Dendritic cell treated with granulocyte-macrophage colony-stimulating factor and Interleukin-4, amounts not matched to agents 40 ng/mL and 50 ng/mL, for 4 days (primary cell): ENCODE measurements at regions of chr19 and their contacts with region 1.

Region 1: DNA sequence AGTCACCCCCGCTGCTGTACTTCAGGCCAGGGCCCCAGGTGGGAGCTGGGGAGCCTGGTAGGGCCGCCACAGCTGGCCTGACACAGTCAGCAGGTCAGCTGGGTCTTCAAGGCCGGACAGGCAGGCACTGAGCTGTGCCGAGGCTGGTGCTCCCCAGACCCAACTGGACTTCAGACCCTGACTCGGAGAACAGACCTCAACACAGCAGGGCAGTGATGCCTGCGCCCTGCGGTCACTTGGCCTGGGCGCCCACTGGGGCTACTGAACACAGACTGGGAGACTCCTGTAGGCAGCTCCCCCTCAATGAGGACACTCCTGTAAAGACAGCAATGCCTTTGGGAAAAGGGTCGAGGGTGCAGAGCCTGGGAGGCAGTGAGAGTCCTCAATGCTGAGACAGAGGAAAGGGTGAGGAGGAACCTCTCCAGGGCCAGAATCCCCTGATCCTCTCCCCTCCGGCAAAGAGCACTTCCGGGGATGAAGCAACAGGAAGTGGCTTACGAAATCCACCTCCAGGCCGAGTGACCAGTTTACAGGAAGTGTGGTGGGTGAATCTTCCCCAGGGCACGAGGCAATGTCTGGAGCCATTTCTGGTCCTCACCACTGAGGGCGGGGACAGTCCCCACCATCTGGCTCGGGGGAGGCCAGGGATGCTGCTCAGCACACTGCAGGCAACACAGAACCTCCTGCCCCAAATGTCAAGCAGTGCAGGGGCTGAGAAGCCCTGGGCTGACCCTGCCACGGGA is 40.8 kb upstream of the ISYNA1 start:
- H3K4me3 Mint-ChIP-seq: peak overlapping the region; percentile 69
- H3K27ac Mint-ChIP-seq: peak overlapping the region; percentile 98
- H3K4me1 Mint-ChIP-seq: peaks cover 97% of the 10 kb centered on the region
- H3K27me3 Mint-ChIP-seq: no peaks in the 10 kb centered on the region

Region 2: GRCh38 chr19:18521885-18522624 is 43.3 kb after region 1 on chr19 and contains the start of gene ELL:
- intact Hi-C with region 1: no loop called
- H3K4me3 Mint-ChIP-seq: peak within 1 kb of the TSS; percentile 90
- H3K27ac Mint-ChIP-seq: peak within 1 kb of the TSS; percentile 88
- H3K4me1 Mint-ChIP-seq: peaks cover 40% of the 10 kb centered on the region
- H3K27me3 Mint-ChIP-seq: no peaks in the 10 kb centered on the region

Region 3: GRCh38 chr19:18571564-18572300 is 93.0 kb after region 1 on chr19 and contains the start of gene UBA52:
- intact Hi-C with region 1: loop called (anchors 5 kb)
- H3K4me3 Mint-ChIP-seq: peak within 1 kb of the TSS; percentile 78
- H3K27ac Mint-ChIP-seq: peak within 1 kb of the TSS; percentile 95
- H3K4me1 Mint-ChIP-seq: peaks cover 25% of the 10 kb centered on the region
- H3K27me3 Mint-ChIP-seq: no peaks in the 10 kb centered on the region